CD8-positive, alpha-beta memory T cell (primary cell): ENCODE measurements at regions of chr16 and their contacts with region 1.

Region 1: GRCh38 chr16:10509534-10510025 is 70.8 kb downstream of the EMP2 start:
- DNase-seq: peak; percentile 42 to 72 (median 58)
- H3K4me3 ChIP-seq: no peak overlapping the region
- H3K4me3 Mint-ChIP-seq: peak overlapping the region in 1 of 7 donors; percentile 1
- H3K27ac ChIP-seq: no peak overlapping the region
- H3K27ac Mint-ChIP-seq: peak overlapping the region in 1 of 8 donors; percentile 57
- H3K4me1 ChIP-seq: no peaks in the 10 kb centered on the region
- H3K4me1 Mint-ChIP-seq: peaks cover 0 to 7% (median 0%) of the 10 kb centered on the region in 3 donors
- H3K27me3 ChIP-seq: no peaks in the 10 kb centered on the region
- H3K27me3 Mint-ChIP-seq: peaks cover 0 to 2% of the 10 kb centered on the region in 2 donors

Region 2: GRCh38 chr16:10256784-10257641 is 252.6 kb before region 1 on chr16:
- CTCF ChIA-PET with region 1: interaction called, 16 read pairs
- POLR2A ChIA-PET with region 1: no interaction called
- DNase-seq: peak; percentile 2 to 54 (median 36)
- H3K4me3 ChIP-seq: no peak overlapping the region
- H3K4me3 Mint-ChIP-seq: no peak overlapping the region
- H3K27ac ChIP-seq: no peak overlapping the region
- H3K27ac Mint-ChIP-seq: no peak overlapping the region
- H3K4me1 ChIP-seq: peaks cover 4% of the 10 kb centered on the region
- H3K4me1 Mint-ChIP-seq: peaks cover 9% of the 10 kb centered on the region in 3 donors
- H3K27me3 ChIP-seq: no peaks in the 10 kb centered on the region
- H3K27me3 Mint-ChIP-seq: peaks cover 4 to 15% of the 10 kb centered on the region in 2 donors

Region 3: GRCh38 chr16:10314811-10315210 is 194.8 kb before region 1 on chr16:
- CTCF ChIA-PET with region 1: interaction called, 51 read pairs
- POLR2A ChIA-PET with region 1: no interaction called
- DNase-seq: peak in 2 of 5 donors; percentile 39 to 44
- H3K4me3 ChIP-seq: no peak overlapping the region
- H3K4me3 Mint-ChIP-seq: no peak overlapping the region
- H3K27ac ChIP-seq: no peak overlapping the region
- H3K27ac Mint-ChIP-seq: no peak overlapping the region
- H3K4me1 ChIP-seq: no peaks in the 10 kb centered on the region
- H3K4me1 Mint-ChIP-seq: peaks cover 22 to 27% (median 26%) of the 10 kb centered on the region in 3 donors
- H3K27me3 ChIP-seq: no peaks in the 10 kb centered on the region
- H3K27me3 Mint-ChIP-seq: peaks cover 0 to 3% of the 10 kb centered on the region in 2 donors

Region 4: DNA sequence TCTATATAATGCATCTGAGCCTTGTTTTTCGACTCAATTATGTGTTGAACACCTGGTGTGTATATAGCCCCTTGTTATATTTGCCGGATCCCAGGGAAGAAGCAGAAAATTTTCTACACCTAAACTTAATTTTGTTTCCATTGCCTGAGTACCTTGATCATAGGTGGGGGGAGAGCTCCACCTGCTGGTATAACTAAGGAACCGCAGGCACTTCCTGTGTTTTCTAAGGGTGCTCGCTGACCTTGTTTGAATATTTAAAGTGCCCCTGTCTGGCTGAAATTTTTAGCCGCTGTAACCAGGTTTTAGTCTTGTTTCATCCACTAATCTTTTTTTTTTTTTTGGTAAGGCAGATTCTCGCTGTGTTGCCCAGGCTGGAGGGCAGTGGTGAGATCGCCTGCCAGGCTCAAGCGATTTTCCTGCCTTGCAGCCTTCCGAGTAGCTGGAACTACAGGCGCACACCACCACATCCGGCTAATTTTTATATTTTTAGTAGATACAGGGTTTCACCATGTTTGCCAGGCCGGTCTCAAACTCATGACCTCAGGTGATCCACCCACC is 227.6 kb after region 1 on chr16:
- CTCF ChIA-PET with region 1: interaction called, 63 read pairs
- POLR2A ChIA-PET with region 1: interaction called, 4 read pairs
- DNase-seq: peak; percentile 47 to 80 (median 70)
- H3K4me3 ChIP-seq: peak overlapping the region; percentile 21
- H3K4me3 Mint-ChIP-seq: peak overlapping the region in 6 of 7 donors; percentile 55 to 81 (median 76)
- H3K27ac ChIP-seq: no peak overlapping the region
- H3K27ac Mint-ChIP-seq: peak overlapping the region; percentile 32 to 92 (median 76)
- H3K4me1 ChIP-seq: peaks cover 10% of the 10 kb centered on the region
- H3K4me1 Mint-ChIP-seq: peaks cover 15 to 34% (median 26%) of the 10 kb centered on the region in 3 donors
- H3K27me3 ChIP-seq: no peaks in the 10 kb centered on the region
- H3K27me3 Mint-ChIP-seq: no peaks in the 10 kb centered on the region